Transverse colon (tissue), 4 donors: ENCODE measurements at regions of chr3 and their contacts with region 1.

Region 1: DNA sequence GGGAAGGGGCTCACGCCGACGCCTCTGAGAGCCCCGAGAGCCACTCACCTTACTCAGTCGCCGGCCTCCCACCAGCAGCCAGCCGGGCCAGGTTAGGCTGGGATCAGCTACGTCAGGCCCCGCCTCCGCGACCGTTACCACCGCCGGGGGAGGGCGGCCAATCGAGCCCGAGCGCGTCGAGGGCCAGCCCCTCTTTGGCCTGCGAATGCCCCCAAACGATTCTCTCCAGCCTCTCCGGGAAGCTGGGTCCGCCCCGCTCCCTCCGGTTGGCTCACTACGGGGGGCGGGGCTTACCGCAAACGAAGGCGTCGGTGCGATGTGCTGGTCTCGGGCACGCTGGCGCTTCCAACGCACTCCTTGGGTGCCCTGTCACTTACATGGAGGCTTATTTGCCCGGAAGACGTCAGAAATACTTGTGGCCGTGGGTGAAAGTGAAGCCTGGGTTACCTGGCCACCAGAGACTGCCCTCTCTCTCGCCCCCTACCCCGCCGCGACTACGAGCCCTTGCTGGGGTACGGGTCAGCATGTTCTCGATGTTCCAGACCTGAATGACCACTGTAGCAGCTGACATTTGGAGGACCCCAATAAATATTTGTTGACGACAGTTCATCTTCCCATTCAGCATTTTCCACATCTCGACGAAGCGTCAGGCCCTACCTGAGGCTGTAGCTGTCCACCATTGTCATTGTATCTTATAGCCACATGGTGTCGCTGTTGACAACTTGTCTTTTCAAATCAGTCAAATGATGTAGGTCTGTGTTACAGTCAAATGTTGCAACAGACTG is at the start of gene CEP70:
- DNase-seq: peak; percentile 96
- H3K4me3 ChIP-seq: peak within 1 kb of the TSS; percentile 49 to 75 (median 58)
- H3K27ac ChIP-seq: peak within 1 kb of the TSS; percentile 88 to 95 (median 92)
- H3K4me1 ChIP-seq: peaks cover 6 to 33% (median 15%) of the 10 kb centered on the region in 4 donors
- H3K27me3 ChIP-seq: no peaks in the 10 kb centered on the region
- CTCF ChIP-seq: peak; percentile 87 to 97 (median 89)
- EP300 ChIP-seq: no peak
- POLR2A ChIP-seq: peak; percentile 97
- total RNA-seq, gene CEP70: 4.1 to 46.8 (median 22.6) TPM

Region 2: DNA sequence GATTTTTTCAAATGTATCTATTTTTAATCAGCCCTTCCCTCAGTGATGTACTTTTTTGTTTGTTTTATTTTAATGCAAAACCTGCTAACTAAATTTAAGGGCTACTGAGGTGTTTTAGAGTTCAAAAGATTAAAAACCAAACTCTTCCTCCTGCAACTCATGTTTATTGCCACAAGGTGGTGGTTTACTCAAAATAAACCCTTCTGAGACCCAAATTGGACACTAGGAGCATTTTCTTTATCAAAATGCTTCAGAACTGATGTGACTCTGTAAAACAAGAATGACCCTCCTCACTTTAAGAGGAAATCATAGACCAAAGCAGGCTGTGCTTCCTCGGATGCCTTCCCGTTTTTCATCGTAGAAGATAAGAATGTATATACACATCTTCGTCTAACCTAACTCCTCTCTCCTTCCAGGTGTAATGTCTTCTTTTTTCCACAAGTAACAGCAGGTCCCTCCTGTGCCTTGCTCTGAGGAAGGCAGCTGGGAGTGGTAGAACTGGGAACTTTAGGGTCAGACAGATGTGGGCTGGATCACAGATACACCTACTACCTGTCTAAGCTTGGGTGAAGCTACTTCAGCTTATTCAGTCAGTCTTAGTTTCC is 261.8 kb before region 1 on chr3:
- in situ Hi-C with region 1: loop called in 1 of 4 experiments (anchors 10 kb)
- intact Hi-C with region 1: no loop called
- DNase-seq: no peak
- H3K4me3 ChIP-seq: no peak overlapping the region
- H3K27ac ChIP-seq: no peak overlapping the region
- H3K4me1 ChIP-seq: peaks cover 0 to 13% (median 8%) of the 10 kb centered on the region in 4 donors
- H3K27me3 ChIP-seq: no peaks in the 10 kb centered on the region
- CTCF ChIP-seq: peak; percentile 31 to 49 (median 49)
- EP300 ChIP-seq: no peak
- POLR2A ChIP-seq: no peak

Region 3: DNA sequence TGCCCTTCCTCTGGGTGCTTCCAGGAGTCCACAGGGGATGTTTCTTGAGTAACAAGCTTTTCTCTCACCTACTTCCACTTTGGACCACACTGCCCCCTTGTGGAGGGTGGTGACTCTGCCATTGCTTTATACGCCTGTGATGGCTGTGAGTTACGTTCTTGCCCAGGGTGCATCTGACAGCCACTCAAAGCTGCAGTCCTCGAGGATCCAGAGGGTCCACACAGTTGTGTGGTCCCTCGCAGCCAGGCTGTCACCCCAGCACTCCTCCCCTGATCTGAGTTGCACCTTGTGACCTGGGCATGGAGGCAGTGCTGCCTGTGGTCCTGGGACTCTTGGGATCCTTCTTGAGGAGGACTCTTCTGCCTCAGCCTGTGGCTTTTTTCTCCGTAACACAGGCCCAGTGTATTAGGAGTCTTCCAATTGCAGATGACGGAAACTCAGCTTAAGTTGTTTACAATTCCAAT is 329.2 kb after region 1 on chr3:
- in situ Hi-C with region 1: loop called in 3 of 4 experiments (anchors 5 to 10 kb)
- intact Hi-C with region 1: no loop called
- DNase-seq: peak; percentile 89
- H3K4me3 ChIP-seq: no peak overlapping the region
- H3K27ac ChIP-seq: no peak overlapping the region
- H3K4me1 ChIP-seq: peaks cover 0 to 3% (median 0%) of the 10 kb centered on the region in 4 donors
- H3K27me3 ChIP-seq: no peaks in the 10 kb centered on the region
- CTCF ChIP-seq: peak; percentile 81 to 94 (median 89)
- EP300 ChIP-seq: no peak
- POLR2A ChIP-seq: no peak